Activated T-helper 1 cell treated with anti-CD3 and anti-CD28 coated beads, Interleukin-12 subunit alpha, Interleukin-12 subunit beta, Interleukin-2, Interleukin-4 antibody, amounts not matched to agents 30 ng/mL and 10 ng/mL and 1 ng/mL, durations not matched to agents 14 hours and 24 hours and 36 hours (primary cell): ENCODE measurements at regions of chr5 and their contacts with region 1.

Region 1: DNA sequence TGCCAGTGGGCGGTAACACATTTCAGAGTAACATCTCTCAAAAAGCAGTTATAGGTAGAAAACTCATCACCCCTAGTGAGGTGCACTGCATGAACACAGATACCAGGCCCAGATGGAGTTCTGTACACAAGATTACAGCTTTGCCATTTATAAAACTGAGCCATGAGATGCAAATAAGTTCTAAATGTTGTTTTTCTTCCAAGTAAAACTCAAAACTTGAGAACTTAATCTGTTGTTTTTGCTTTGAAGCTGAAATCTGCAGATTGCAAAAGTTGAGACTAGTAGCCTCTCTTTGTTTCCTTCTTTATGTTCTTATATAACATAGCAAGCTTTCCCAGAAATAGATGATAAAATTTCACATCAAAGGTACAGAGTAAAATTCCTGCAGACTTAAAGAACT is 434.1 kb downstream of the PLK2 start:
- DNase-seq: no peak
- H3K4me3 Mint-ChIP-seq: no peak overlapping the region
- H3K27ac Mint-ChIP-seq: no peak overlapping the region
- H3K4me1 Mint-ChIP-seq: no peaks in the 10 kb centered on the region
- H3K27me3 Mint-ChIP-seq: no peaks in the 10 kb centered on the region

Region 2: GRCh38 chr5:57915536-57915935 is 110.3 kb before region 1 on chr5:
- intact Hi-C with region 1: no loop called
- DNase-seq: no peak
- H3K4me3 Mint-ChIP-seq: no peak overlapping the region
- H3K27ac Mint-ChIP-seq: no peak overlapping the region
- H3K4me1 Mint-ChIP-seq: no peaks in the 10 kb centered on the region
- H3K27me3 Mint-ChIP-seq: no peaks in the 10 kb centered on the region

Region 3: DNA sequence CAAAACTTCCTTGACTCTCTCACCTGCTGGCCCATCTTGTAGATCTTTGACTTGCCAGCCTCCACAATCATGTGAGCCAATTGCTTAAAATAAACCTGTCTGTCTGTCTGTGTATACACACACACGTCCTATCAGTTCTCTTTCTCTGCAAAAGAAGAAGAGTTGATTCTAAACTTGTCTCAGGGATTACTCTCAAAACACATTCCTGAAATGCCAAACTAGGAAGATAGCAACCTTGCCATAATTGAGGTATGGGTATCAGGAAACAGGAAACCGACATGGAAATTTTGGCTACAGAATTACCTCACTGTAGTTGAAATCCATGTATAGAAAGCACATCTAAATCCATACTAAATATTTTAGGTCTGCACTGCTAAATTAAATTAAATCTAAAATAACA is 49.3 kb before region 1 on chr5:
- intact Hi-C with region 1: no loop called
- DNase-seq: no peak
- H3K4me3 Mint-ChIP-seq: no peak overlapping the region
- H3K27ac Mint-ChIP-seq: no peak overlapping the region
- H3K4me1 Mint-ChIP-seq: no peaks in the 10 kb centered on the region
- H3K27me3 Mint-ChIP-seq: no peaks in the 10 kb centered on the region

Region 4: DNA sequence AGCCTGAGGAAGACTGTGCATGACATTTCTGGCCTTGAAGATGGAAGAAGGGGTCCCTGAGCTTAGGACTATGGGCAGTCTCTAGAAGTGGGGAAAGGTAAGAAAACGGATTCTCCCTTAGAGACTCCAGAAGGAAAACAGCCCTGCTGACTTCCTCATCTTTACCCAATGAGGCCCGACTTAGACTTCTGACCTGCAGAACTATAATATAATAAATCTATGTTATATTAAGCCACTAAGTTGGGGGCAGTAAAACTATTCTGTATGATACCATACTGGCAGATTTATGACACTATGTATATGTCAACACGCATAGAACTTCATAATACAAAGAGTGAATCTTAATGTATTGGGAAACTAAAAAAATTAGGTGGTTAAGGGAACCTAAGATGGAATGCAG is 12.1 kb after region 1 on chr5:
- intact Hi-C with region 1: loop called (anchors 1 kb)
- DNase-seq: no peak
- H3K4me3 Mint-ChIP-seq: no peak overlapping the region
- H3K27ac Mint-ChIP-seq: no peak overlapping the region
- H3K4me1 Mint-ChIP-seq: no peaks in the 10 kb centered on the region
- H3K27me3 Mint-ChIP-seq: no peaks in the 10 kb centered on the region

Region 5: GRCh38 chr5:58240286-58240685 is 214.5 kb after region 1 on chr5:
- intact Hi-C with region 1: no loop called
- DNase-seq: no peak
- H3K4me3 Mint-ChIP-seq: no peak overlapping the region
- H3K27ac Mint-ChIP-seq: no peak overlapping the region
- H3K4me1 Mint-ChIP-seq: no peaks in the 10 kb centered on the region
- H3K27me3 Mint-ChIP-seq: no peaks in the 10 kb centered on the region